Testis (tissue), 5 donors: ENCODE measurements at regions of chr6 and their contacts with region 1.

Region 1: GRCh38 chr6:56364827-56365313 is 117.5 kb upstream of the COL21A1 start:
- DNase-seq: no peak
- H3K4me3 ChIP-seq: no peak overlapping the region
- H3K27ac ChIP-seq: no peak overlapping the region
- H3K4me1 ChIP-seq: peaks cover 5% of the 10 kb centered on the region
- H3K27me3 ChIP-seq: no peaks in the 10 kb centered on the region
- CTCF ChIP-seq: no peak
- POLR2A ChIP-seq: no peak

Region 2: DNA sequence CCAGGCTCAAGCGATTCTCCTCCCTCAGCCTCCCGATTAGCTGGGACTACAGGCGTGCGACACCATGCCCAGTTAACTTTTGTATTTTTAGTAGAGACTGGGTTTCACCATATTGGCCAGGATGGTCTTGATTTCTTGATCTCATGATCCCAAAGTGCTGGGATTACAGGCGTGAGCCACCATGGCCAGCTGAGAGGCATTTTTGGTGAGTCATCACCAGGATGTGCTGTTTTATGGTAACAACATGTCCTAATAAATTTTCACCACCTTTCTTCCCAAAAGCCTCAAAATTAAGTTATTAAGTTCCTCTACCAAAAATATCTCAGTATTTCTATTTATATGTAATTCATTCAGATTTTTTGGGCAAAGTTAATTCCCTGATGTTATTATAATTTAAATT is 171.0 kb before region 1 on chr6:
- intact Hi-C with region 1: no loop called
- DNase-seq: no peak
- H3K4me3 ChIP-seq: no peak overlapping the region
- H3K27ac ChIP-seq: no peak overlapping the region
- H3K4me1 ChIP-seq: no peaks in the 10 kb centered on the region
- H3K27me3 ChIP-seq: no peaks in the 10 kb centered on the region
- CTCF ChIP-seq: no peak
- POLR2A ChIP-seq: no peak

Region 3: GRCh38 chr6:56214041-56214702 is 150.7 kb before region 1 on chr6:
- intact Hi-C with region 1: no loop called
- DNase-seq: no peak
- H3K4me3 ChIP-seq: no peak overlapping the region
- H3K27ac ChIP-seq: no peak overlapping the region
- H3K4me1 ChIP-seq: no peaks in the 10 kb centered on the region
- H3K27me3 ChIP-seq: no peaks in the 10 kb centered on the region
- CTCF ChIP-seq: no peak
- POLR2A ChIP-seq: no peak

Region 4: DNA sequence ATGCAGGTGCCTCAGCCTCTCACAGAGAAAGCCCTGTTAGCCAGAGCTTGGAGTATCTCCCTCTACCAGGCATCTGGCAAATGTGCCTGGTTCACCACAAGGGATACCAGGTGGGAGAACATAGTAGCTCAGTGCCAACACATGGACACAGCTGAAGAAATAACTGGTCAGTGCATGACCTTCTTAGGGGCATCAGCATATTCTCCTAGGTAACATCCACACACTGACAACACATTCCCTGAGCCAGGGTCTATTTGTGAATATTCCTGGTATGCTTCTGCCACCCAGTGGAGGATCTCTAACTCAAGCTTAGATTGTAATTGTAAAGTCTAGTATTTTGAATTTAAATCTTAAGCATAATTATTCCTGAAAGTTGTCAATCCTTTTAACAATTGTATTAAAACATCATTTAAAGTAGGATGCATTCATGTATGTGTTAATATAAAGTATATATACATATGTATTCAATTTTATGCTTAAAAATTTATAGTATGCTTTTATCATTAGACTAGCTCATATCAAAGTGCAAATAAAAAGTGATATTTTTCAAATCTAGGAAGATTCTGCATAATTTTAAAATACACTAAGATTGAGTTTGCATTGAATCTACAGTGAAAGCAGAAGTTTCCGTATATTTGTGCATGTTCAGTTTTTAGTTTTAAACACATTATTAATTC is 72.2 kb before region 1 on chr6:
- intact Hi-C with region 1: no loop called
- DNase-seq: peak; percentile 53
- H3K4me3 ChIP-seq: no peak overlapping the region
- H3K27ac ChIP-seq: no peak overlapping the region
- H3K4me1 ChIP-seq: no peaks in the 10 kb centered on the region
- H3K27me3 ChIP-seq: no peaks in the 10 kb centered on the region
- CTCF ChIP-seq: peak; percentile 57 to 78 (median 62)
- POLR2A ChIP-seq: no peak

Region 5: GRCh38 chr6:56542364-56543331 is 177.8 kb after region 1 on chr6:
- intact Hi-C with region 1: loop called (anchors 10 kb)
- DNase-seq: peak; percentile 98
- H3K4me3 ChIP-seq: peak overlapping the region; percentile 59 to 70
- H3K27ac ChIP-seq: peak overlapping the region; percentile 90 to 95
- H3K4me1 ChIP-seq: peaks cover 5% of the 10 kb centered on the region
- H3K27me3 ChIP-seq: no peaks in the 10 kb centered on the region
- CTCF ChIP-seq: peak in 2 of 3 experiments; percentile 26 to 52
- POLR2A ChIP-seq: peak; percentile 87